ENCODE measurements at regions of chr2 and their contacts with region 1.

Region 1: GRCh38 chr2:126413079-126413478 is 242.9 kb upstream of the GYPC start:
- DNase-seq: no peak
- H3K4me3 Mint-ChIP-seq: no peak overlapping the region
- H3K27ac Mint-ChIP-seq: peak overlapping the region; percentile 8
- H3K4me1 Mint-ChIP-seq: peaks cover 9% of the 10 kb centered on the region
- H3K27me3 Mint-ChIP-seq: peaks cover 6% of the 10 kb centered on the region

Region 2: DNA sequence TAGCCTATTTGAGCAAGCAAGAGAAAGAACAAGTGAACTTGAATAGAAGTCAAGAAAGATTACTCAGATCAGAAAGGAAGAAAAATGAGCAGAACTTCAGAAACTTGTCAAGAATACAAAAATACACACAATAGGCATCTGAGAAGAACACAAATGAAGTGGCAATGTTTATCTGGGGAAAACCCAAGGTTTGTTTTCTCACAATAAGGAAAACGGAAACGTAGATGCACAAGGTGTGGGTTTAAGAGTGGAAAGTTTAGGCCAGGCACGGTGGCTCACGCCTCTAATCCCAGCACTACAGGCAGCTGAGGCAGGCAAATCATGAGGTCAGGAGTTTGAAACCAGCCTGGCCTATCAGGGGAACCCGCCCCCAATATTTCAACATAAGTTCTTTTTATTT is 83.4 kb after region 1 on chr2:
- intact Hi-C with region 1: loop called (anchors 1 kb)
- DNase-seq: no peak
- H3K4me3 Mint-ChIP-seq: no peak overlapping the region
- H3K27ac Mint-ChIP-seq: peak overlapping the region; percentile 65
- H3K4me1 Mint-ChIP-seq: no peaks in the 10 kb centered on the region
- H3K27me3 Mint-ChIP-seq: peaks cover 3% of the 10 kb centered on the region

Measured in activated T-helper 1 cell treated with anti-CD3 and anti-CD28 coated beads, Interleukin-12 subunit alpha, Interleukin-12 subunit beta, Interleukin-2, Interleukin-4 antibody, amounts not matched to agents 30 ng/mL and 10 ng/mL and 1 ng/mL, durations not matched to agents 14 hours and 24 hours and 36 hours (primary cell).